PC-9 (cell line): ENCODE measurements at regions of chr3 and their contacts with region 1.

Region 1: DNA sequence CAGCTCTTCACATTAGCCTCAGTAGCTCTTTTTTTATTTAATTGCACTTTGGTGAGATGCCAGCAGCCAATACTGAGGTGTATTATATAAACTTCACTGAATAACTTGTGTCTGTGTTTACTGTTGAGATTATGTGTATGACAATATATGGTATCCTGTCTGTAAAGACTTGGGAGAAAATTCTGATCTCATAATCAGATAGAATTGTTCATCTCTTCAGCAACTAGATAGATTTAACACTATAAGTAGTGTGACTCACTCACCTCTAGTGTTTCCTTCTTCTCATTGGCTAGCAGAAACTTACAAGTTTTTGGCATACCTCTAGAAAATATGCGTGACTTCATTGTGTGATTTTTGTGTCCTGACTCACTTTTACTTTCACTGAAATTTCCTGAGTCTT is 67.6 kb upstream of the TGFBR2 start:
- DNase-seq: peak; percentile 20 to 93
- H3K4me3 ChIP-seq: peak overlapping the region; percentile 46; the same call in 1 of the 2 replicates
- H3K27ac ChIP-seq: peak overlapping the region; percentile 97
- H3K4me1 ChIP-seq: peaks cover 22% of the 10 kb centered on the region
- H3K27me3 ChIP-seq: no peaks in the 10 kb centered on the region
- CTCF ChIP-seq: no peak

Region 2: GRCh38 chr3:30347679-30348216 is 191.0 kb before region 1 on chr3:
- CTCF ChIA-PET with region 1: no interaction called
- POLR2A ChIA-PET with region 1: no interaction called
- intact Hi-C with region 1: loop called (anchors 10 kb)
- DNase-seq: peak in 1 of 2 experiments; percentile 47
- H3K4me3 ChIP-seq: no peak overlapping the region
- H3K27ac ChIP-seq: no peak overlapping the region
- H3K4me1 ChIP-seq: peaks cover 18% of the 10 kb centered on the region
- H3K27me3 ChIP-seq: no peaks in the 10 kb centered on the region
- CTCF ChIP-seq: no peak

Region 3: DNA sequence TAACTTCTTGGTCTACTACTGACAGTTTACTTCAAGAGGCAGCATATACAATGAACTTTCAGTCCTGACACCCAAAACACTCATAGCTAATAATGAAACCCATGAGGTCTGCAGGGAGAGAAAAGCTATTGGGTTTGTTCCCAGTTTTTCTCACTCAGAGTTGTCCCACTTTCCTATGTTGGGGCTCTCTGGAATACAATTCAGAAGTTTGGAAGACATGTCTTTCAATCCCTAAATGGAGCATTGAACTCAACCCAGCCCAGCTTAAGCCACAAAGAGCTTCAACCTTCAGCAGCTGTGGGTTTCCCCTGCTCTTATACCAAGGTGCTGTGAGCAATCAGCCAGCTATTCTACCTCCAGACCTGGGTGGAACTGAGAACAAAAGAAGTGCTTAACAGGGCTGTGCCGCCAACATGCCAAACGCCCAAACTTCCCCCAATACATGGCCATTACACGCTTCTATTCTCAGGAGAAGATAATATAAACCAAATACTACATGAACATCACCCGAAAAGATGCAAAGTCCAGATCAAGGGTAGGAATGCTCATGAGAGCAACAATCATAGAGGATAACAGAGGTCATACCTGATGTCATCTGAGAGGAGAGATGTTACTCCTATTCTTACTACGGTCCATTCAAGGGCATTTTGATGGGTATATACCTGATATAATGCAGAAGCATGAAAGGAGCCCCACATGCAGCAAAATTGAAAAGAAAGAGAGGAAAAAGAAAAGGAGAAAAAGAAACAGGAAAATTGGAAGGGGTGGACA is 63.6 kb before region 1 on chr3:
- CTCF ChIA-PET with region 1: no interaction called
- POLR2A ChIA-PET with region 1: no interaction called
- intact Hi-C with region 1: loop called (anchors 5 kb)
- DNase-seq: no peak
- H3K4me3 ChIP-seq: no peak overlapping the region
- H3K27ac ChIP-seq: no peak overlapping the region
- H3K4me1 ChIP-seq: peaks cover 9% of the 10 kb centered on the region; the same call in 1 of the 2 replicates
- H3K27me3 ChIP-seq: no peaks in the 10 kb centered on the region
- CTCF ChIP-seq: no peak

Region 4: DNA sequence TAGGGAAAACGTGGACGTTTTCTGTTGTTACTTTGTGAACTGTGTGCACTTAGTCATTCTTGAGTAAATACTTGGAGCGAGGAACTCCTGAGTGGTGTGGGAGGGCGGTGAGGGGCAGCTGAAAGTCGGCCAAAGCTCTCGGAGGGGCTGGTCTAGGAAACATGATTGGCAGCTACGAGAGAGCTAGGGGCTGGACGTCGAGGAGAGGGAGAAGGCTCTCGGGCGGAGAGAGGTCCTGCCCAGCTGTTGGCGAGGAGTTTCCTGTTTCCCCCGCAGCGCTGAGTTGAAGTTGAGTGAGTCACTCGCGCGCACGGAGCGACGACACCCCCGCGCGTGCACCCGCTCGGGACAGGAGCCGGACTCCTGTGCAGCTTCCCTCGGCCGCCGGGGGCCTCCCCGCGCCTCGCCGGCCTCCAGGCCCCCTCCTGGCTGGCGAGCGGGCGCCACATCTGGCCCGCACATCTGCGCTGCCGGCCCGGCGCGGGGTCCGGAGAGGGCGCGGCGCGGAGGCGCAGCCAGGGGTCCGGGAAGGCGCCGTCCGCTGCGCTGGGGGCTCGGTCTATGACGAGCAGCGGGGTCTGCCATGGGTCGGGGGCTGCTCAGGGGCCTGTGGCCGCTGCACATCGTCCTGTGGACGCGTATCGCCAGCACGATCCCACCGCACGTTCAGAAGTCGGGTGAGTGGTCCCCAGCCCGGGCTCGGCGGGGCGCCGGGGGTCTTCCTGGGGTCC is 67.7 kb after region 1 on chr3 and contains the start of gene TGFBR2:
- CTCF ChIA-PET with region 1: no interaction called
- POLR2A ChIA-PET with region 1: no interaction called
- intact Hi-C with region 1: loop called (anchors 2 kb)
- DNase-seq: peak; percentile 85 to 92
- H3K4me3 ChIP-seq: peak within 1 kb of the TSS; percentile 80
- H3K27ac ChIP-seq: peak within 1 kb of the TSS; percentile 67
- H3K4me1 ChIP-seq: peaks cover 24% of the 10 kb centered on the region
- H3K27me3 ChIP-seq: no peaks in the 10 kb centered on the region
- CTCF ChIP-seq: no peak
- total RNA-seq, gene TGFBR2: 26.4 and 33.6 TPM in 2 replicates